A549 (cell line): ENCODE measurements at regions of chr4 and their contacts with region 1.

Region 1: GRCh38 chr4:139295206-139295941 is 5.9 kb upstream of the NAA15 start:
- DNase-seq: peak; percentile 72 to 88
- ATAC-seq: peak; percentile 97 to 99
- H3K4me3 ChIP-seq: peak overlapping the region; percentile 59
- H3K27ac ChIP-seq: peak overlapping the region; percentile 88 to 99
- H3K4me1 ChIP-seq: peaks cover 17% of the 10 kb centered on the region; the same call in 2 of the 3 replicates
- CTCF ChIP-seq: peak; percentile 76
- EP300 ChIP-seq: no peak
- POLR2A ChIP-seq: peak; percentile 65
- RAD21 ChIP-seq: peak; percentile 71 to 77

Region 2: GRCh38 chr4:138749303-138749702 is 546.1 kb before region 1 on chr4:
- CTCF ChIA-PET with region 1: no interaction called
- POLR2A ChIA-PET with region 1: no interaction called
- DNase-seq: no peak
- ATAC-seq: no peak
- H3K4me3 ChIP-seq: no peak overlapping the region
- H3K27ac ChIP-seq: no peak overlapping the region
- H3K4me1 ChIP-seq: no peaks in the 10 kb centered on the region
- CTCF ChIP-seq: no peak
- EP300 ChIP-seq: no peak
- POLR2A ChIP-seq: no peak
- RAD21 ChIP-seq: no peak

Region 3: DNA sequence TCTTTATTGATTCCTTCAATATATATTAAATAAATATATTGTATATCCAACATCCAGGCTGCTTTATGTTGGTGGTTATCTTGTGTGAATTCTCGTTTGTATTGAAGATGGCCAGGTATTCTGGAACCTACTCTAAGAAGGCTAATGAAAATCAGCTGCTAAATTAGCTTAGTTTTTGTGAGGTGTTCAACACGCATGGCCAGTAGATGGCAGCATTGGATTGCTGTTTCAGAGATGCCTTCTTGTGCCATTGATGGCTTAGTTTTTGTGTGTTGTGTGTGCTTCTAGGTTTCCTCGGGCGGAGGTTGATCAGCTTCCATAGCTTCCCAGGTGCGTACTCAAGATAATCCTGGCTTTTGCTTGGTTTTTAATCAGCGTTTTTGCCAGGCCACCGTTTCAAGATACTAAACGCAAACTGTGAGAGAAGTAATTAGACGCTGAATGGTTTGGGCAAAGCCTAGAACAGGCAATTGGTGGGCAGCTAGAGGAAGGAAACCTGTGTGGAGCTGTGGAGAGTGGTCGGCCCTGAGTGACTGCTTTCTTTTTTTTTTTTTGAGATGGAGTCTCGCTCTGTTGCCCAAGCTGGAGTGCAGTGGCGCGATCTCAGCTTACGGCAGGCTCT is 264.6 kb before region 1 on chr4:
- CTCF ChIA-PET with region 1: interaction called, 12 read pairs
- POLR2A ChIA-PET with region 1: interaction called, 3 read pairs
- DNase-seq: peak; percentile 35 to 72
- ATAC-seq: peak; percentile 55 to 66; a peak in 4 of 6 replicates
- H3K4me3 ChIP-seq: no peak overlapping the region
- H3K27ac ChIP-seq: no peak overlapping the region
- H3K4me1 ChIP-seq: peaks cover 15% of the 10 kb centered on the region; the same call in 2 of the 3 replicates
- CTCF ChIP-seq: peak; percentile 70
- EP300 ChIP-seq: no peak
- POLR2A ChIP-seq: no peak
- RAD21 ChIP-seq: peak; percentile 68 to 71

Region 4: GRCh38 chr4:139099366-139099982 is 195.9 kb before region 1 on chr4:
- CTCF ChIA-PET with region 1: interaction called, 17 read pairs
- POLR2A ChIA-PET with region 1: no interaction called
- DNase-seq: peak; percentile 47 to 81
- ATAC-seq: peak; percentile 68 to 88; a peak in 5 of 6 replicates
- H3K4me3 ChIP-seq: no peak overlapping the region
- H3K27ac ChIP-seq: no peak overlapping the region
- H3K4me1 ChIP-seq: no peaks in the 10 kb centered on the region
- CTCF ChIP-seq: peak; percentile 79
- EP300 ChIP-seq: no peak
- POLR2A ChIP-seq: no peak
- RAD21 ChIP-seq: peak; percentile 78 to 87

Region 5: GRCh38 chr4:139177868-139178611 is 117.3 kb before region 1 on chr4:
- CTCF ChIA-PET with region 1: interaction called, 8 read pairs
- POLR2A ChIA-PET with region 1: interaction called, 27 read pairs
- DNase-seq: peak; percentile 58 to 90
- ATAC-seq: peak; percentile 70 to 84
- H3K4me3 ChIP-seq: peak overlapping the region; percentile 92
- H3K27ac ChIP-seq: peak overlapping the region; percentile 85 to 100
- H3K4me1 ChIP-seq: peaks cover 13% of the 10 kb centered on the region; the same call in 2 of the 3 replicates
- CTCF ChIP-seq: no peak
- EP300 ChIP-seq: no peak
- POLR2A ChIP-seq: peak; percentile 92
- RAD21 ChIP-seq: no peak

Region 6: DNA sequence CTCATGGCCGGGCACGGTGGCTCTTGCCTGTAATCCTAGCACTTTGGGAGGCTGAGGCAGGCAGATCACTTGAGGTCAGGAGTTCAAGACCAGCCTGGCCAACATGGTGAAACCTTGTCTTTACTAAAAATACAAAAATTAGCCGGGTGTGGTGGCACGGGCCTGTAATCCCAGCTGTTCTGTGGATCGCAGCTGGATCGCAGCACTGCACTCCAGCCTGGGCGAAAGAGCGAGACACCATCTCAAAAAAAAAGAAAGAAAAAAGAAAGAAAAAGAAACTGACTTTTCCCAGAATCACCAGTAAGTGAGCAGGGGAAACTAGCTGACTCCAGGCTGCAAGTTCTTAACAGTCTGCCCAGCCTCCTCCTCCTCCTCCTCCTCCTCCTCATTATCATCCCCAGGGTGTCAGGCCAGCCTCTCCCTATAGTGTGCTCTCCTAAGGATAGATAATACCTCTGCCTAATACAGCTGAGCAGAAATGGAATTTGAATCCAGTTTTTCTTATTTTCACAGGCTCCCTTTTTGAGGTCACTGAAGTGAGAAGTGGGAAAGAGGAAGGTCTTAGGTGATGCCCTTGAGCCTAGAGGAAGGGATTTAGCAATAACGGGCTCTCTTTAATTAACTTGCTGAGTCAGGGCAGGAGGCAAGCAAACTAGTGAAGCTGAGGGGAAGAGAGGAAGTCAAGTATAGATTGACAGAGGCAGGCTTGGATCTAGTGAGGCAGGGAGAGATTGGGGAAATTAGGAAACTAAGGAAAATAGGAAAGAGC is 106.5 kb before region 1 on chr4:
- CTCF ChIA-PET with region 1: interaction called, 23 read pairs
- POLR2A ChIA-PET with region 1: no interaction called
- DNase-seq: no peak
- ATAC-seq: no peak
- H3K4me3 ChIP-seq: no peak overlapping the region
- H3K27ac ChIP-seq: no peak overlapping the region
- H3K4me1 ChIP-seq: 0 out of 3 replicates have a peak, but pooled peaks cover 5% of the 10 kb centered on the region
- CTCF ChIP-seq: no peak
- EP300 ChIP-seq: no peak
- POLR2A ChIP-seq: no peak
- RAD21 ChIP-seq: no peak

Region 7: GRCh38 chr4:139229534-139230039 is 65.8 kb before region 1 on chr4:
- CTCF ChIA-PET with region 1: interaction called, 23 read pairs
- POLR2A ChIA-PET with region 1: no interaction called
- DNase-seq: peak; percentile 29 to 49
- ATAC-seq: peak; percentile 66 to 89; a peak in 4 of 6 replicates
- H3K4me3 ChIP-seq: no peak overlapping the region
- H3K27ac ChIP-seq: no peak overlapping the region
- H3K4me1 ChIP-seq: no peaks in the 10 kb centered on the region
- CTCF ChIP-seq: peak; percentile 59
- EP300 ChIP-seq: no peak
- POLR2A ChIP-seq: no peak
- RAD21 ChIP-seq: peak; percentile 63 to 69

Region 8: DNA sequence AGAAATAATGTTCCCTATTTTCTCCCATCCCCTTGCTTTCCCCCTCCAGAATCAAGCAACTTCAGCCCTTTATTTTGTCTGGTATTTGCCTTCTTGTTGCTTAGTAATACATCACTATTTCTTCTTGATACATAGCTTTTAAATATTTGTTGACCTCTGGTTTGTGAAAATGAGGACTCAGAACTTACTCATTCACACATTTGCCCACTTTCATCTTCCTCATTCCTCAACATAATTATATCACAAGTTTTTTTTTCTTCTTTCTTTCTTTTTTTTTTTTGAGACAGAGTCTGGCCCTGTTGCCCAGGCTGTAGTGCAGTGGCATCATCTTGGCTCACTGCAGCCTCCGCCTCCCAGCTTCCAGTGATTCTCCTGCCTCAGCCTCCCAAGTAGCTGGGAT is 35.8 kb after region 1 on chr4:
- CTCF ChIA-PET with region 1: no interaction called
- POLR2A ChIA-PET with region 1: no interaction called
- DNase-seq: no peak
- ATAC-seq: no peak
- H3K4me3 ChIP-seq: no peak overlapping the region
- H3K27ac ChIP-seq: no peak overlapping the region
- H3K4me1 ChIP-seq: peaks cover 9% of the 10 kb centered on the region; the same call in 1 of the 3 replicates
- CTCF ChIP-seq: no peak
- EP300 ChIP-seq: no peak
- POLR2A ChIP-seq: no peak
- RAD21 ChIP-seq: no peak

Region 9: GRCh38 chr4:139483000-139483399 is 187.6 kb after region 1 on chr4:
- CTCF ChIA-PET with region 1: no interaction called
- POLR2A ChIA-PET with region 1: no interaction called
- DNase-seq: no peak
- ATAC-seq: no peak
- H3K4me3 ChIP-seq: no peak overlapping the region
- H3K27ac ChIP-seq: no peak overlapping the region
- H3K4me1 ChIP-seq: no peaks in the 10 kb centered on the region
- CTCF ChIP-seq: no peak
- EP300 ChIP-seq: no peak
- POLR2A ChIP-seq: no peak
- RAD21 ChIP-seq: no peak